ENCODE measurements at regions of chrX and their contacts with region 1.

Region 1: GRCh38 chrX:78307665-78308064 is 19.7 kb downstream of the CYSLTR1 start:
- DNase-seq: no peak
- ATAC-seq: no peak
- H3K4me3 ChIP-seq: no peak overlapping the region
- H3K27ac ChIP-seq: no peak overlapping the region
- H3K4me1 ChIP-seq: no peaks in the 10 kb centered on the region
- H3K27me3 ChIP-seq: peaks cover 0 to 5% (median 0%) of the 10 kb centered on the region in 7 donors
- CTCF ChIP-seq: no peak

Region 2: GRCh38 chrX:77617206-77617605 is 690.5 kb before region 1 on chrX:
- intact Hi-C with region 1: no loop called
- DNase-seq: no peak
- ATAC-seq: no peak
- H3K4me3 ChIP-seq: no peak overlapping the region
- H3K27ac ChIP-seq: no peak overlapping the region
- H3K4me1 ChIP-seq: no peaks in the 10 kb centered on the region
- H3K27me3 ChIP-seq: peaks cover 0 to 8% (median 0%) of the 10 kb centered on the region in 7 donors
- CTCF ChIP-seq: no peak

Region 3: GRCh38 chrX:78322863-78323262 is 15.2 kb after region 1 on chrX:
- intact Hi-C with region 1: loop called in 1 of 10 experiments (anchors 1 kb)
- DNase-seq: no peak
- ATAC-seq: peak in 1 of 8 donors; percentile 20
- H3K4me3 ChIP-seq: no peak overlapping the region
- H3K27ac ChIP-seq: no peak overlapping the region
- H3K4me1 ChIP-seq: peaks cover 0 to 22% (median 0%) of the 10 kb centered on the region in 9 donors
- H3K27me3 ChIP-seq: peaks cover 0 to 5% (median 0%) of the 10 kb centered on the region in 7 donors
- CTCF ChIP-seq: no peak

Region 4: GRCh38 chrX:78517124-78517523 is 209.5 kb after region 1 on chrX:
- intact Hi-C with region 1: no loop called
- DNase-seq: no peak
- ATAC-seq: no peak
- H3K4me3 ChIP-seq: no peak overlapping the region
- H3K27ac ChIP-seq: no peak overlapping the region
- H3K4me1 ChIP-seq: no peaks in the 10 kb centered on the region
- H3K27me3 ChIP-seq: peaks cover 0 to 7% (median 0%) of the 10 kb centered on the region in 7 donors
- CTCF ChIP-seq: no peak

Region 5: GRCh38 chrX:78592030-78592429 is 284.4 kb after region 1 on chrX:
- intact Hi-C with region 1: no loop called
- DNase-seq: no peak
- ATAC-seq: no peak
- H3K4me3 ChIP-seq: no peak overlapping the region
- H3K27ac ChIP-seq: no peak overlapping the region
- H3K4me1 ChIP-seq: no peaks in the 10 kb centered on the region
- H3K27me3 ChIP-seq: peaks cover 0 to 6% (median 0%) of the 10 kb centered on the region in 7 donors
- CTCF ChIP-seq: no peak

Region 6: GRCh38 chrX:79440336-79440735 is 1132.7 kb after region 1 on chrX:
- intact Hi-C with region 1: no loop called
- DNase-seq: no peak
- ATAC-seq: no peak
- H3K4me3 ChIP-seq: no peak overlapping the region
- H3K27ac ChIP-seq: no peak overlapping the region
- H3K4me1 ChIP-seq: no peaks in the 10 kb centered on the region
- H3K27me3 ChIP-seq: no peaks in the 10 kb centered on the region
- CTCF ChIP-seq: no peak